ENCODE measurements at regions of chr3 and their contacts with region 1.

Region 1: DNA sequence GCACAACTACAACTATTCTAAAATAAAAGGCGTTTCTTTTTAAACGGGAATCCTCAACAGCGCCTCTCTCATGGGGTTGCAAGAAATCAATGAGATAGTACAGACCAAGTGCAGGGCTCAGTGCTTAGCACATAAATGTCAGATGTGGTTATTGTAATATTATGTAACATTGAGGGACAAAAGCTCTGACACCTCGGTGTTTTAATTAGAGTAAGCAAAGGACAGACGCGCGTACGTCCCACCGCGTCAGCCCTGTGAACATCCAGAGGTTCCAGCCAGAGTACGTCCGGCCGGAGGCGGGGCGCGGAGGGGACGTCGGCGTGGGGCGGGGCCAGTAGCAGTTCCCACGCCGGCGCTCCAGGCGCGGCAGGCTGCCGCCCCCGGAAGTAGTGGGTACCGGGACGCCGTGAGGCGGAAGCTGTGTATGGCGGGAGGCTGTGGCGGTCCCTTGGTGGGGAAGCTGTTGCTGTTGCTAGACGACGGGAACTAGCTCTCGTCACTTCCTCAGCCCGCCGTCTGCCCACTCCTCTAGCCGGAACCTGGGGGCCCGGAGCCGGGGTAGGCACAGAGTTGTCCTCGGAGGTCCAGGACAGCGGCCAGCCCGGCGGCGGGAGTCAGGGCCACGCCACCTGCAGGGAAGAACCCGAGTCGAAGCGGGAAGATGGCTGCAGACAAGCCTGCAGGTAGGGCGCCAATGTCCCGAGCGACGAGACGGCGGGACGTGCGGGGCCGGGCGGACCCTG is at the start of gene CNOT10:
- DNase-seq: peak; percentile 92 to 97 (median 96)
- ATAC-seq: peak; percentile 92 to 93
- H3K4me3 Mint-ChIP-seq: peak within 1 kb of the TSS; percentile 91 to 98 (median 93)
- H3K27ac Mint-ChIP-seq: peak within 1 kb of the TSS; percentile 90 to 99 (median 97)
- H3K4me1 Mint-ChIP-seq: peaks cover 19 to 45% (median 39%) of the 10 kb centered on the region in 4 donors
- H3K27me3 Mint-ChIP-seq: no peaks in the 10 kb centered on the region
- polyA plus RNA-seq, gene CNOT10: 27.3 to 32.0 (median 29.9) TPM

Region 2: DNA sequence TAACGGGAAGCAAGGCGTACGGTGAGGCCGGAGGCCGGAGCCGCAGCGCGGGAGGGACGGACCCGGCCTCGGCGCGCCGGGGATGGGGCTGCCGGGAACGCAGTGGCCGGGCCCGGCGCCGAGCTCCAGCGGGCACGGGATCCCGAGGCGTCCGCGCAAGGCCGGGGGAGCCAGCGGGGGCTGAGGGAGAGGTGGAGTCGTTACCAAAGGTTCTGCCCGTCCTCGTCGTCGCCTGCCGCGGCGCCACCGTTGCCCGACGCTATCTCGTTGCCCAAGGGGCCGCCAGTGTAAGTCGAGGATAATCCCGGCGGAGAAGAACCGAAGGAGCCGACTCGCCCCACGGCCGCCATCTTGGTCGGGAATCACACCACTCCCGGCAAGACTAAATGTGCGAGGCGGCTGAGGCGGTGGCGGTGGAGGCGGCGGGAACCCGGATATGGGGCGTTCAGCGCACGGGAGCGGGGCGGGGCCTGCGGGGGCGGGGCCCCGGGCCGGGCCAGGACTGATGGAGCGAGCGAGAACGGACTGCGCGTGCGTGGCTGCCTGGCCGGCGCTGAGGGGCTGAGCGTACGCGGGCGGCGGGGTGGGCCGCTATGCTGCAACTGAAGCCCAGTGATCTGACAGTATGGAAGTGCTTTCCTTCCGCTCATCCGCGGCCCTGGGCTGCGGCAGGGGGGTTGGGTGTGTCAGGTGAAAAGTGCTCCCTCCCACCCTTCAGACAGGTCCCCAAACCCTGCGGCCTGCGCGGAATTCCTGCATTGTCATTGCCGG is 114.4 kb before region 1 on chr3 and contains the start of gene DYNC1LI1:
- POLR2A ChIA-PET with region 1: interaction called, 10 read pairs
- DNase-seq: peak; percentile 86 to 98 (median 92)
- ATAC-seq: peak; percentile 93 to 95
- H3K4me3 Mint-ChIP-seq: peak within 1 kb of the TSS; percentile 81 to 96 (median 92)
- H3K27ac Mint-ChIP-seq: peak within 1 kb of the TSS; percentile 63 to 96 (median 94)
- H3K4me1 Mint-ChIP-seq: peaks cover 10 to 36% (median 32%) of the 10 kb centered on the region in 4 donors
- H3K27me3 Mint-ChIP-seq: no peaks in the 10 kb centered on the region
- polyA plus RNA-seq, gene DYNC1LI1: 14.7 to 22.7 (median 19.3) TPM

Region 3: GRCh38 chr3:32667122-32667521 is 17.8 kb before region 1 on chr3:
- POLR2A ChIA-PET with region 1: interaction called, 10 read pairs
- DNase-seq: no peak
- ATAC-seq: no peak
- H3K4me3 Mint-ChIP-seq: no peak overlapping the region
- H3K27ac Mint-ChIP-seq: no peak overlapping the region
- H3K4me1 Mint-ChIP-seq: peaks cover 0 to 1% (median 0%) of the 10 kb centered on the region in 4 donors
- H3K27me3 Mint-ChIP-seq: peaks cover 0 to 4% (median 0%) of the 10 kb centered on the region in 5 donors

Measured in naive thymus-derived CD8-positive, alpha-beta T cell (primary cell).